ENCODE measurements at regions of chr5 and their contacts with region 1.

Region 1: GRCh38 chr5:149731639-149732323 is 1.7 kb downstream of the PPARGC1B start:
- DNase-seq: peak; percentile 47 to 85 (median 61)
- H3K4me3 ChIP-seq: peak overlapping the region; percentile 39 to 76
- H3K4me3 Mint-ChIP-seq: peak overlapping the region; percentile 85 to 92 (median 88)
- H3K27ac ChIP-seq: no peak overlapping the region
- H3K27ac Mint-ChIP-seq: peak overlapping the region; percentile 19 to 82 (median 76)
- H3K4me1 ChIP-seq: no peaks in the 10 kb centered on the region
- H3K4me1 Mint-ChIP-seq: peaks cover 0 to 14% (median 1%) of the 10 kb centered on the region in 4 donors
- H3K27me3 ChIP-seq: no peaks in the 10 kb centered on the region
- H3K27me3 Mint-ChIP-seq: no peaks in the 10 kb centered on the region

Region 2: GRCh38 chr5:149646564-149646963 is 85.2 kb before region 1 on chr5:
- CTCF ChIA-PET with region 1: no interaction called
- POLR2A ChIA-PET with region 1: interaction called, 5 read pairs
- intact Hi-C with region 1: loop called (anchors 5 kb)
- DNase-seq: peak in 3 of 5 donors; percentile 22 to 33 (median 27)
- H3K4me3 ChIP-seq: no peak overlapping the region
- H3K4me3 Mint-ChIP-seq: no peak overlapping the region
- H3K27ac ChIP-seq: no peak overlapping the region
- H3K27ac Mint-ChIP-seq: peak overlapping the region in 2 of 7 donors; percentile 8
- H3K4me1 ChIP-seq: peaks cover 6% of the 10 kb centered on the region
- H3K4me1 Mint-ChIP-seq: peaks cover 0 to 8% (median 4%) of the 10 kb centered on the region in 4 donors
- H3K27me3 ChIP-seq: no peaks in the 10 kb centered on the region
- H3K27me3 Mint-ChIP-seq: peaks cover 0 to 1% of the 10 kb centered on the region in 2 donors

Region 3: DNA sequence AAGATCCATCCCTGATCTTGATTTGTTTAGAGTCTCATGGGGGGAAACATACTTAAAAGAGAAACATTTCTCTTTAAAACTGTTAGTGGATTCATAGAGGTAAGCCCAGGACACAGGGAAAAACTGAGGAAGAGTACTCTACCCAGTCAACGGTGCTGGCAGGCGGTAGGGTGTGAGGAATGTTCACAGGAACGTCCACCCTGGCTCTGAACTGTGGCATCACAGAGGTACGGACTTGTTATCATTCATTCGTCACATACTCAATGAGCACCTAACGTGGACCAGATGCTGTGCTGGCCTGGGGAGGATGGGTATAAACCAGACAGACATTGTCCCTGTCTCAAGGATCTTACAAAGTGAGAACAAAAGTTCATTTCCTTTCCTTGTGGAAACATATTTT is 20.4 kb before region 1 on chr5:
- CTCF ChIA-PET with region 1: no interaction called
- POLR2A ChIA-PET with region 1: no interaction called
- intact Hi-C with region 1: no loop called
- DNase-seq: no peak
- H3K4me3 ChIP-seq: no peak overlapping the region
- H3K4me3 Mint-ChIP-seq: no peak overlapping the region
- H3K27ac ChIP-seq: no peak overlapping the region
- H3K27ac Mint-ChIP-seq: no peak overlapping the region
- H3K4me1 ChIP-seq: no peaks in the 10 kb centered on the region
- H3K4me1 Mint-ChIP-seq: no peaks in the 10 kb centered on the region
- H3K27me3 ChIP-seq: peaks cover 8% of the 10 kb centered on the region
- H3K27me3 Mint-ChIP-seq: peaks cover 14 to 22% of the 10 kb centered on the region in 2 donors

Region 4: GRCh38 chr5:150320048-150320555 is 588.3 kb after region 1 on chr5:
- CTCF ChIA-PET with region 1: no interaction called
- POLR2A ChIA-PET with region 1: no interaction called
- intact Hi-C with region 1: no loop called
- DNase-seq: no peak
- H3K4me3 ChIP-seq: no peak overlapping the region
- H3K4me3 Mint-ChIP-seq: no peak overlapping the region
- H3K27ac ChIP-seq: no peak overlapping the region
- H3K27ac Mint-ChIP-seq: no peak overlapping the region
- H3K4me1 ChIP-seq: no peaks in the 10 kb centered on the region
- H3K4me1 Mint-ChIP-seq: peaks cover 0 to 2% (median 0%) of the 10 kb centered on the region in 4 donors
- H3K27me3 ChIP-seq: no peaks in the 10 kb centered on the region
- H3K27me3 Mint-ChIP-seq: peaks cover 0 to 2% of the 10 kb centered on the region in 2 donors